Thyroid gland (tissue), 4 donors: ENCODE measurements at regions of chr11 and their contacts with region 1.

Region 1: DNA sequence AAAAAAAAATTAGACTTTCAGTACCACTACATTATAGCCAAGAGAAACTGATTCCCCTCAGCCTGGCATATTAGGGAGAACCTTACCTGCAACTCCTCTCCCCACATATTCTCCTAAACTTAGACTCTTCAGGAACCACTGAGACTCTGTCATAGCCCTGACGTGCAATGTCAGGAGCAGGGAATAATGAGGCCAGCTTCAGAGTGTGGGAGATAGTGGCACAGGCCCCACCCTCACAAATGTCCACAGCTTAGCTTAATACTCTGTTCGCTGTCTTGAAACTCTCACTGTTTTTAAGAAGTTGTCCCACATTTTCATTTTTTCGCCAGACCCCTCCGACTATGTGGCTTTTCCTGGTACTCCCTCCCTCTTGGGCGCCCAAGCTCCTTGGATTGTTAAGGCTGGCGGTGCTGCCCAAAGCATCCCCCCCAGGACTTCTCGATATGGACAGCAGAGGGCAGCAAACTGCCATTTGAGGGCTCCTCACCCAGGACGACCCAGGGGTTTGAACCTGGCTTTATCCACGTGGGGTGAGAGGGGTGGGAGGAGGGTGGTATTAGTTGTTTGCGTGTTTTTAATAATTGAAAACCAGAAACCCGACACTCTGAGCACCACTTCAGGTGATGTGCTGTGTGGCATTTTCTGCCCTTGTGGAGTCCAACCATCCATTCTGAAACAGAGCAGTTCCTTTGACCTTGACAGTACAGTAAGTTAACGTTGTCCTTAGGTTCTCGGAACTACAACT is 45.2 kb upstream of the RASSF10 start:
- DNase-seq: peak; percentile 68 to 69
- H3K4me3 ChIP-seq: no peak overlapping the region
- H3K27ac ChIP-seq: no peak overlapping the region
- H3K4me1 ChIP-seq: peaks cover 0 to 4% of the 10 kb centered on the region in 2 donors
- H3K27me3 ChIP-seq: no peaks in the 10 kb centered on the region
- CTCF ChIP-seq: peak; percentile 74 to 92 (median 89)
- POLR2A ChIP-seq: no peak

Region 2: DNA sequence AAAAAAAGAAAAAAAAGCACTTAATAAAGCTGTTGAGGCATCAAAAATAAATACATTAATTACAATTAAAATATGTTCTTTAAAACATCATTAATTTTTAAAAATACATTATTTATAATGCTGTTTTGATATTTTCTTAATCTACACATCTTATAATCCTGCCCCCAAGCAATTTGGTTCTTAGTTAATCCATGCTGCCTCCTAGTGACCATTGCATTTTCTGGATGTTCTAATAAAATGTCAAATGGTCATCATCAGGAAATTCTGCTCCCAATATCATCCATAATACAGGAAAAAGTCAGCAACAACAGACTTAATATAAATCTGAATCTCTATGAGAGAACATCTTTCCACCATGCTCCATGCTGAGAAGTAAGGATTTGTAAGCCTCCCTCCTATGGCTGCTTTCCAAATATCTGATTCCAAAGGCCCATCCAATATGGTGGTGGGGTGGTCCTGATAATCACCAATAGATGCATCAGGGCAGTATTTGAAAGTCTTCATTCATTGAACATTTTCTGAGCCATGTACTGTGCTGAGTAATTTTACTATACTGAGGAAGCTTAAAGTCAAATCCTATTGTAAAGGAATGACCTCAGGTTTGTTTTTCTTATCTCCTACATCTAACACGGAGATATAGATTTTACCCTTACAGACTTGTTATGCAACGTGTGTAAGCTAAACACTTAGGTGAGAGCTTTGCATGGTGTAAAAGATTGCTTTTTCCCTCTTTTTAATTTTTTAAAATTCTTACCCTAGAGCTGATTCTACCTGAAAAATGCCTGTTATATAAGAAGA is 189.0 kb after region 1 on chr11:
- intact Hi-C with region 1: loop called (anchors 2 kb)
- DNase-seq: no peak
- H3K4me3 ChIP-seq: no peak overlapping the region
- H3K27ac ChIP-seq: no peak overlapping the region
- H3K4me1 ChIP-seq: no peaks in the 10 kb centered on the region
- H3K27me3 ChIP-seq: no peaks in the 10 kb centered on the region
- CTCF ChIP-seq: peak in 5 of 6 experiments; percentile 26 to 67 (median 50)
- POLR2A ChIP-seq: no peak